ENCODE measurements at regions of chr15 and their contacts with region 1.

Region 1: DNA sequence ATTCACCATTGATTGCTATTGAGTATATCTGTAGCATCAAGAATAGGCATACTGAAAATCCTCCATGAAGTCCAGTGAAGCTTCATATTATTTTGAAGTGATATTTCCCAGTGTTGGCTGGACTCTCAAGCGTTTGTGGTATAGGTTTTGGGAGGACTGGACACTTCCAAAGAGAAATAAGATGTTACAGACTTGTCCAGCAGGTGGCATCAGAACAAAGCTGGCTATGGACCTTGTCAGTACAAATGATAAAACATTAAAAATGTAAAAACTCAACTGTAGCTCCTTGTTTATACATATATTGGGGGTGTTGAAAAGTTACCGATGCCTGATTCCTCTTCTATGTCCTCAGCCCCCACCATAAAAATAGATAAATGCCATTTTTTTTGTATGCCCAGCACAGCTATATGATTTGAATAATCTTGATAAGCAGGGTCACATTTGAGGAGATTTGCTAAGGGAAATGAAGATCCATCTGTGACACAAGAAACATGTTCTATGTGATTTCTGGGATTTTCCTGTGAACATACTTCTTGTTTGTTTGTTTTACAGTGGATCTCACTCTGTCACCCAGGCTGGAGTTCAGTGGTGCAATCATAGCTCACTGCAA is 54.5 kb upstream of the GOLGA6B start:
- DNase-seq: peak; percentile 39
- H3K4me3 ChIP-seq: no peak overlapping the region
- H3K27ac ChIP-seq: no peak overlapping the region
- H3K27me3 ChIP-seq: no peaks in the 10 kb centered on the region
- CTCF ChIP-seq: peak; percentile 74

Region 2: GRCh38 chr15:72117486-72118399 is 482.2 kb before region 1 on chr15 and contains the start of gene MYO9A:
- CTCF ChIA-PET with region 1: no interaction called
- POLR2A ChIA-PET with region 1: no interaction called
- DNase-seq: peak; percentile 96
- H3K4me3 ChIP-seq: peak within 1 kb of the TSS; percentile 98
- H3K27ac ChIP-seq: peak within 1 kb of the TSS; percentile 99
- H3K27me3 ChIP-seq: no peaks in the 10 kb centered on the region
- CTCF ChIP-seq: no peak
- polyA plus RNA-seq, gene MYO9A: 14.3 and 15.2 TPM in 2 replicates

Region 3: GRCh38 chr15:72464251-72464650 is 135.7 kb before region 1 on chr15:
- CTCF ChIA-PET with region 1: interaction called, 11 read pairs
- POLR2A ChIA-PET with region 1: no interaction called
- DNase-seq: no peak
- H3K4me3 ChIP-seq: no peak overlapping the region
- H3K27ac ChIP-seq: no peak overlapping the region
- H3K27me3 ChIP-seq: no peaks in the 10 kb centered on the region
- CTCF ChIP-seq: no peak

Region 4: DNA sequence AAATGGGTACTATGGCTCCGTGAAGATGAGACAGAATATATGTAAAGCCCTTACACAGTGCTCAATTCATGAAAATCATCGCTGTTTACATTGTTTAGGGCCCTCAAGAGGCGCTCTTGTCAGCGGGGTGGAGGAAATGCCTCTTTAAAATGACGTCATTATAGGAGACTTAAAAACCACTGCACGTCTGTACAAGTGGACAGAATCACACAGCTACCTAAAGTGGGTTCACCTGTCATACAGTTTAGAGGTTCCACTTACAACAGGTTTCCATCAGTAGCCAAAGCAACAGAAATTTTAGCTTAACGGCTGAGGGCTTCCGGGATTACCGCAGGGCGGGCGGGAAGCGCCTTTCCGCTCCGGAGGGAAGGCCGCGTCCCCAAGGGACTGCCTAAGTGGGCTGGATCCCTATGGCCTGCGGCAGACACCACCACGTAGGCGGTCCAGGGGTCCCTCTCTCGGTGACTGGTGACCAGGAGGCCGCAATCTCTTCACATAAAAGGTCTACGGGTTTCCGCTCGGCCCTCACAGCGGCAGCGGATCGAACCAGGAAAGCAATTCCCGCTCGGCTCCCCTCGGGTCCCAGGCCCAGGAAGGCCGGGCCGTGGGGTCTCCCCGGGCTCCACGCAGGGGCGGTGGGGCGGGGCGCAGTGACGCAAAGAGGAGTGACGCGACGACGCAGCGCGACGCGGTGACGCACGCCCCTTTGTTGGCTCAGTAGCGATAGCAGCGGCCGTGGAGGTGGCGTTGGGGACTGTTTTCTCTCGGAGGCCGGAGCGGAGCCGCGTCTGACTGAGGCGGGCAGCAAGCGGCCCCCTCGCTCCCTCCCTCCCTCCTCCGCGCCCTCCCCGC is 126.1 kb before region 1 on chr15 and contains the start of gene ARIH1:
- CTCF ChIA-PET with region 1: interaction called, 10 read pairs
- POLR2A ChIA-PET with region 1: no interaction called
- DNase-seq: peak; percentile 86
- H3K4me3 ChIP-seq: peak within 1 kb of the TSS; percentile 91
- H3K27ac ChIP-seq: peak within 1 kb of the TSS; percentile 100
- H3K27me3 ChIP-seq: no peaks in the 10 kb centered on the region
- CTCF ChIP-seq: peak; percentile 56
- polyA plus RNA-seq, gene ARIH1: 85.8 and 90.4 TPM in 2 replicates

Region 5: GRCh38 chr15:72585476-72586082 is 14.4 kb before region 1 on chr15:
- CTCF ChIA-PET with region 1: interaction called, 41 read pairs
- POLR2A ChIA-PET with region 1: no interaction called
- DNase-seq: no peak
- H3K4me3 ChIP-seq: no peak overlapping the region
- H3K27ac ChIP-seq: no peak overlapping the region
- H3K27me3 ChIP-seq: no peaks in the 10 kb centered on the region
- CTCF ChIP-seq: peak; percentile 41

Region 6: GRCh38 chr15:72671535-72671934 is 71.6 kb after region 1 on chr15:
- CTCF ChIA-PET with region 1: interaction called, 10 read pairs
- POLR2A ChIA-PET with region 1: no interaction called
- DNase-seq: no peak
- H3K4me3 ChIP-seq: no peak overlapping the region
- H3K27ac ChIP-seq: no peak overlapping the region
- H3K27me3 ChIP-seq: peaks cover 15% of the 10 kb centered on the region
- CTCF ChIP-seq: no peak

Region 7: DNA sequence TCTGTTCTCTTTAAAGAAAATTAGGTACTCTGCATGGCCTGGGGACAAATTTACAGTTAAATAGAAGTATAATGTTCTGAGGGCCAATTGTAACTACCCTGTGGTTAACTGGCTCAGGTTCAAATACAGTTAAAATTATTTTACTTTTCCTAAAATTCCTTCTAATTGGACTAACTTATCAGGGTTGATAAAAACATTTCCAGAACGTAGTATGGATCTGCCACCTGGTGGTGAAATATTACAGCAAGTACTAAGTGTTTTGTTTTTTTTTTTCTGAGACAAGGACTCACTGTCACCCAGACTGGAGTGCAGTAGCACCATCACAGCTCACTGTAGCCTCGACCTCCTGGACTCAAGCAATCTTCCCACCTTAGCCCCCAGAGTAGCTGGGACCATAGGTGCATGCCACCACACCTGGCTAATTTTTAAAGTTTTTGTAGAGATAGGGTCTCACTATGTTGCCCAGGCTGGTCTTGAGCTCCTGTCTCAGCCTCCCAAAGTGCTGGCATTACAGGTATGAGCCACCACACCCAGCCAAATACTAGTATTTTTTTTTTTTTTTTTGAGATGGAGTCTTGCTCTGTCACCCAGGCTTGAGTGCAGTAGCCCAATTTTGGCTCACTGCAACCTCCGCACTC is 481.5 kb after region 1 on chr15:
- CTCF ChIA-PET with region 1: interaction called, 22 read pairs
- POLR2A ChIA-PET with region 1: no interaction called
- DNase-seq: peak; percentile 26
- H3K4me3 ChIP-seq: no peak overlapping the region
- H3K27ac ChIP-seq: no peak overlapping the region
- H3K27me3 ChIP-seq: peaks cover 2% of the 10 kb centered on the region
- CTCF ChIP-seq: peak; percentile 70